Heart right ventricle (tissue), 16 donors: ENCODE measurements at regions of chr17 and their contacts with region 1.

Region 1: GRCh38 chr17:1617620-1618174 is 10.9 kb downstream of the SLC43A2 start:
- DNase-seq: peak in 1 of 2 donors; percentile 48
- ATAC-seq: peak; percentile 42 to 88 (median 76)
- H3K4me3 ChIP-seq: peak overlapping the region in 1 of 10 donors; percentile 11
- H3K27ac ChIP-seq: peak overlapping the region in 5 of 10 donors; percentile 4 to 66 (median 58)
- H3K4me1 ChIP-seq: peaks cover 0 to 28% (median 12%) of the 10 kb centered on the region in 9 donors
- H3K27me3 ChIP-seq: no peaks in the 10 kb centered on the region
- CTCF ChIP-seq: peak in 2 of 9 donors; percentile 12 to 20

Region 2: DNA sequence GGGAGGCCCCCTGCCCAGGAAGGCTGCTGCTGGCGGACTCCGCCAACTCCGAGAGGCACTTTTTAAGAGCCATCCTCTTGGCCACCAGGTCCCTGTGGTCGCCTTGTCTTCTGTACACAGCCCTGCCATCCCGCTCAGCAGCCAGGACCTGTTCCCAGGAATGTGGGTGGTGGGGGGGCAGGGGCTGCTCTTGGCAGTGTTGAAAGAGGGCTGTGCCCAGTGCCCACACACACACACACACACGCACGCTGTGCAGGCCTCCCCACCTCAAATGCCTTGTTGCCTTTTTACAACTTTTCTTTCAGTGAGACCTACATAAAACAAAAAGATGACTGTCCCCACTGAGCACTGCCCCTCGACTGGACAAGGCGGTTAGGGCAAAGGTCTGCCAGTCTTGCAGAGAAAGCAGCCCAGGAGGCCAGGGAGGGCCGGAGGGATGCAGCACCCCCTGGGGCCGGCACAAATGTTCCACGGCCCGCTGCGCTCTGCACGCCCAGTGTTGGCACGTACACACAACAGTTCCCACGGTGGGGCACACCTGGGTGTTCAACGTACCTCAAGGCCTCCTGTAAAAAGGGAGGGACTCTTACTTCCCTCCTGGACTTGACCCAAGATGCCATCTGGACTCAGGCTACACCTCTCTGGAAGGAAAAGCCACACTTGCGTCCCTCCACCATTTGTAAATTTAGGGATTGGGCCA is 36.6 kb before region 1 on chr17:
- intact Hi-C with region 1: loop called in 1 of 10 experiments (anchors 5 kb)
- DNase-seq: no peak
- ATAC-seq: no peak
- H3K4me3 ChIP-seq: no peak overlapping the region
- H3K27ac ChIP-seq: no peak overlapping the region
- H3K4me1 ChIP-seq: peaks cover 11 to 48% (median 19%) of the 10 kb centered on the region in 9 donors
- H3K27me3 ChIP-seq: no peaks in the 10 kb centered on the region
- CTCF ChIP-seq: no peak